ENCODE measurements at regions of chr13 and their contacts with region 1.

Region 1: GRCh38 chr13:80342471-80343380 is 1.8 kb upstream of the SPRY2 start:
- DNase-seq: no peak
- ATAC-seq: peak; percentile 51
- H3K4me3 ChIP-seq: peak overlapping the region; percentile 43; the same call in 1 of the 2 replicates
- H3K27ac ChIP-seq: no peak overlapping the region
- H3K4me1 ChIP-seq: no peaks in the 10 kb centered on the region
- H3K27me3 ChIP-seq: no peaks in the 10 kb centered on the region; a peak in 1 of 4 replicates
- CTCF ChIP-seq: peak; percentile 91 to 95 (median 94)
- EP300 ChIP-seq: no peak
- POLR2A ChIP-seq: no peak
- RAD21 ChIP-seq: peak; percentile 83

Region 2: GRCh38 chr13:79782541-79783205 is 560.1 kb before region 1 on chr13:
- CTCF ChIA-PET with region 1: interaction called, 6 read pairs
- POLR2A ChIA-PET with region 1: no interaction called
- RAD21 ChIA-PET with region 1: interaction called, 13 read pairs
- SMC1A ChIA-PET with region 1: interaction called, 5 read pairs
- in situ Hi-C with region 1: no loop called
- intact Hi-C with region 1: loop called (anchors 5 kb)
- DNase-seq: no peak
- ATAC-seq: peak; percentile 88
- H3K4me3 ChIP-seq: no peak overlapping the region
- H3K27ac ChIP-seq: no peak overlapping the region
- H3K4me1 ChIP-seq: no peaks in the 10 kb centered on the region
- H3K27me3 ChIP-seq: no peaks in the 10 kb centered on the region
- CTCF ChIP-seq: no peak
- EP300 ChIP-seq: peak in 1 of 2 experiments; percentile 62; a peak in 1 of 4 replicates
- POLR2A ChIP-seq: no peak
- RAD21 ChIP-seq: no peak

Region 3: GRCh38 chr13:79936368-79937136 is 406.2 kb before region 1 on chr13:
- CTCF ChIA-PET with region 1: no interaction called
- POLR2A ChIA-PET with region 1: no interaction called
- RAD21 ChIA-PET with region 1: no interaction called
- SMC1A ChIA-PET with region 1: no interaction called
- in situ Hi-C with region 1: no loop called
- intact Hi-C with region 1: no loop called
- DNase-seq: no peak
- ATAC-seq: no peak
- H3K4me3 ChIP-seq: no peak overlapping the region
- H3K27ac ChIP-seq: no peak overlapping the region
- H3K4me1 ChIP-seq: no peaks in the 10 kb centered on the region
- H3K27me3 ChIP-seq: no peaks in the 10 kb centered on the region
- CTCF ChIP-seq: no peak
- EP300 ChIP-seq: no peak
- POLR2A ChIP-seq: no peak
- RAD21 ChIP-seq: no peak

Region 4: GRCh38 chr13:80121038-80121437 is 221.7 kb before region 1 on chr13:
- CTCF ChIA-PET with region 1: no interaction called
- POLR2A ChIA-PET with region 1: no interaction called
- RAD21 ChIA-PET with region 1: interaction called, 5 read pairs
- SMC1A ChIA-PET with region 1: interaction called, 3 read pairs
- in situ Hi-C with region 1: no loop called
- intact Hi-C with region 1: loop called (anchors 5 kb)
- DNase-seq: no peak
- ATAC-seq: peak; percentile 84
- H3K4me3 ChIP-seq: no peak overlapping the region
- H3K27ac ChIP-seq: no peak overlapping the region
- H3K4me1 ChIP-seq: no peaks in the 10 kb centered on the region
- H3K27me3 ChIP-seq: no peaks in the 10 kb centered on the region
- CTCF ChIP-seq: no peak
- EP300 ChIP-seq: no peak
- POLR2A ChIP-seq: no peak
- RAD21 ChIP-seq: no peak

Region 5: GRCh38 chr13:80284290-80284689 is 58.4 kb before region 1 on chr13:
- CTCF ChIA-PET with region 1: no interaction called
- POLR2A ChIA-PET with region 1: no interaction called
- RAD21 ChIA-PET with region 1: no interaction called
- SMC1A ChIA-PET with region 1: no interaction called
- in situ Hi-C with region 1: no loop called
- intact Hi-C with region 1: no loop called
- DNase-seq: no peak
- ATAC-seq: no peak
- H3K4me3 ChIP-seq: no peak overlapping the region
- H3K27ac ChIP-seq: no peak overlapping the region
- H3K4me1 ChIP-seq: no peaks in the 10 kb centered on the region
- H3K27me3 ChIP-seq: no peaks in the 10 kb centered on the region
- CTCF ChIP-seq: no peak
- EP300 ChIP-seq: no peak
- POLR2A ChIP-seq: no peak
- RAD21 ChIP-seq: no peak

Region 6: GRCh38 chr13:80363890-80364503 is 21.3 kb after region 1 on chr13:
- CTCF ChIA-PET with region 1: interaction called, 228 read pairs
- POLR2A ChIA-PET with region 1: interaction called, 147 read pairs
- RAD21 ChIA-PET with region 1: interaction called, 347 read pairs
- SMC1A ChIA-PET with region 1: interaction called, 360 read pairs
- in situ Hi-C with region 1: no loop called
- intact Hi-C with region 1: loop called (anchors 2 kb)
- DNase-seq: no peak
- ATAC-seq: no peak
- H3K4me3 ChIP-seq: no peak overlapping the region
- H3K27ac ChIP-seq: no peak overlapping the region
- H3K4me1 ChIP-seq: no peaks in the 10 kb centered on the region
- H3K27me3 ChIP-seq: no peaks in the 10 kb centered on the region
- CTCF ChIP-seq: peak; percentile 62 to 70 (median 62); a peak in 5 of 6 replicates
- EP300 ChIP-seq: no peak
- POLR2A ChIP-seq: no peak
- RAD21 ChIP-seq: peak; percentile 80

Region 7: DNA sequence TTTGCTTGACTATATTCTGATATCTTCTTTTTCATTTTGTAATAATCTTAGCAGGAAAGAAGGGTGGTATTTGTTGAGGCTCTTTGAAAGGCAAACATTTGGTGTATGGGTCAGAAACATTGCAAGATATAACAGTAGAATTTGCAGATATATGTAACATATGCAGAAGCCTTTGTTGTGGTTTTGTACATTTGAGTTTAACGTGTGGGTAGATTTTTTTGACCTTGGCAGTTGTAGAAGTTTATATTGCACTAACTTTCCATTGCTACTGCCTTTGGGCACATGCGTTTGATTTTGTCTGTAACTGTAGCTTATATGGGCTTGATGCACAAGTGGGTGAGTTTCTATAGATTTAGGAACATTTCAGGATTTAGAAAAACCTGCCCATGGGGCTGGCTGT is 76.7 kb after region 1 on chr13:
- CTCF ChIA-PET with region 1: interaction called, 11 read pairs
- POLR2A ChIA-PET with region 1: interaction called, 3 read pairs
- RAD21 ChIA-PET with region 1: interaction called, 12 read pairs
- SMC1A ChIA-PET with region 1: interaction called, 18 read pairs
- in situ Hi-C with region 1: no loop called
- intact Hi-C with region 1: no loop called
- DNase-seq: no peak
- ATAC-seq: peak; percentile 63
- H3K4me3 ChIP-seq: no peak overlapping the region
- H3K27ac ChIP-seq: no peak overlapping the region
- H3K4me1 ChIP-seq: no peaks in the 10 kb centered on the region
- H3K27me3 ChIP-seq: no peaks in the 10 kb centered on the region
- CTCF ChIP-seq: no peak
- EP300 ChIP-seq: no peak
- POLR2A ChIP-seq: no peak
- RAD21 ChIP-seq: no peak

Region 8: DNA sequence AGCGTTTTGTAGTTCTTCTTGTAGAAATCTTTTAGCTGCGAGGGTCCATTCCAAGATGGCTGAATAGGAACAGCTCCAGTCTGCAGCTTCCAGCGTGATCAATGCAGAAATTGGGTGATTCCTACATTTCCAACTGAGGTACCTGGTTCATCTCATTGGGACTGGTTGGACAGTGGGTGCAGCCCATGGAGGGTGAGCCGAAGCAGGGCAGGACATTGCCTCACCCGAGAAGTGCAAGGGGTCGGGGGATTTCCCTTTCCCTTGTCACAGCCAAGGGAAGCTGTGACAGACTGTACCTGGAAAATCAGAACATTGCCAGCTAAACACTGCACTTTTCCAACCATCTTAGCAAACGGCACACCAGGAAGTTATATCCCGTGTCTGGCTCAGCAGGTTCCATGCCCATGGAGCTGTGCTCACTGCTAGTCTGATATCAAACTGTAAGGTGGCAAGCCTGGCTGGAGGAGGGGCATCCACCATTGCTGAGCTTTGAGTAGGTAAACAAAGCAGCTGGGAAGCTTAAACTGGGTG is 174.2 kb after region 1 on chr13:
- CTCF ChIA-PET with region 1: no interaction called
- POLR2A ChIA-PET with region 1: no interaction called
- RAD21 ChIA-PET with region 1: no interaction called
- SMC1A ChIA-PET with region 1: no interaction called
- in situ Hi-C with region 1: no loop called
- intact Hi-C with region 1: no loop called
- DNase-seq: no peak
- ATAC-seq: no peak
- H3K4me3 ChIP-seq: no peak overlapping the region
- H3K27ac ChIP-seq: no peak overlapping the region
- H3K4me1 ChIP-seq: no peaks in the 10 kb centered on the region
- H3K27me3 ChIP-seq: no peaks in the 10 kb centered on the region
- CTCF ChIP-seq: no peak
- EP300 ChIP-seq: no peak
- POLR2A ChIP-seq: no peak
- RAD21 ChIP-seq: no peak

Region 9: DNA sequence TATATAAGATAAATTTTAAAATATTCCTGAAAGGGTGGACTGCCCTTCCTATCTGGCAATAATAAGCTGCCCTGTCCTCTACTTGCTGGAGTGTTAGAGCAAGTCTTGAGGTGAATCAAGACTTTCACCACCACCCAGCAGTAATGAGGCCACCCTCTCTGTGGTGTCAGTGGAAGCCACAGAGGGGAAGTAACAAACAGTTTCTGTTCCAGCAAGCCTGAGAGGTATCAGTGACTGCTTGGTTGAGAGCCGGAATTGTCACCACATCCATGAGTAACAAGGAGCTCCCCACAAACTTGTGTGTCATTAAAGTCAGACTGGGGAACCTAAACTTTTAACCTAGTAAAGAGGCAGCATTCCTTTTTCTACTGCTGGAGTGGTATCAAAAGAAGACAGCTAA is 530.9 kb after region 1 on chr13:
- CTCF ChIA-PET with region 1: interaction called, 4 read pairs
- POLR2A ChIA-PET with region 1: no interaction called
- RAD21 ChIA-PET with region 1: no interaction called
- SMC1A ChIA-PET with region 1: no interaction called
- in situ Hi-C with region 1: no loop called
- intact Hi-C with region 1: loop called (anchors 5 kb)
- DNase-seq: peak; percentile 33
- ATAC-seq: peak; percentile 100
- H3K4me3 ChIP-seq: no peak overlapping the region
- H3K27ac ChIP-seq: no peak overlapping the region
- H3K4me1 ChIP-seq: no peaks in the 10 kb centered on the region
- H3K27me3 ChIP-seq: no peaks in the 10 kb centered on the region
- CTCF ChIP-seq: no peak
- EP300 ChIP-seq: peak in 1 of 2 experiments; percentile 77; a peak in 1 of 4 replicates
- POLR2A ChIP-seq: no peak
- RAD21 ChIP-seq: no peak

Measured in GM12878 (cell line).